ENCODE measurements at regions of chr3 and their contacts with region 1.

Region 1: GRCh38 chr3:170506556-170506955 is 79.3 kb downstream of the SLC7A14 start:
- DNase-seq: no peak
- H3K4me3 ChIP-seq: no peak overlapping the region
- H3K27ac ChIP-seq: no peak overlapping the region
- H3K4me1 ChIP-seq: no peaks in the 10 kb centered on the region; a peak in 1 of 7 replicates
- H3K27me3 ChIP-seq: no peaks in the 10 kb centered on the region
- CTCF ChIP-seq: no peak
- EP300 ChIP-seq: no peak
- POLR2A ChIP-seq: no peak
- RAD21 ChIP-seq: no peak

Region 2: GRCh38 chr3:170476291-170476690 is 30.3 kb before region 1 on chr3:
- CTCF ChIA-PET with region 1: no interaction called
- POLR2A ChIA-PET with region 1: no interaction called
- DNase-seq: peak in 1 of 2 experiments; percentile 44
- H3K4me3 ChIP-seq: no peak overlapping the region
- H3K27ac ChIP-seq: no peak overlapping the region
- H3K4me1 ChIP-seq: peaks cover 0 to 3% (median 0%) of the 10 kb centered on the region in 4 experiments; a peak in 1 of 7 replicates
- H3K27me3 ChIP-seq: no peaks in the 10 kb centered on the region
- CTCF ChIP-seq: no peak
- EP300 ChIP-seq: no peak
- POLR2A ChIP-seq: no peak
- RAD21 ChIP-seq: peak in 1 of 2 experiments; percentile 8; a peak in 1 of 4 replicates

Region 3: DNA sequence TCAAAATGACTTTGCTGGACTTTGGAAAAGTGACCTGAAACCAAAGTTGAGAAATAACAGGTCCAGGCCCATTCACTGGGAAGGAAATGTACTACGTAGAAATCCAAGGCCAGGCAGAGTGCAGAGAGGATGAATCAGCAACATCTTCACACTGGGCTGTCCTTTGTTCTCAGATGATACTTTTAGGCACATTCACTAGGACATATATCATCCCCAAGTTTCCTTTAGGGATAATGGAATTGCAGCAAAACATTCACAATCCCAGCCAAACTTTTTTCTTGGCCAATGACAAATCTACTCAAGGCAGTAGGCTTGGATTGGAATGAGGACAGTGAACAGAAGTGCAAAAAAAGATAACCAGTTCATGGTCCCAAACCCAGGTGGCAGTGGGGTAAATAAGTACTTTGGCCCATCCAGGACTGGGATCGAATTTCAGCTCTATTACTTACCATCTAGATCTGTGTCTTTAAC is 12.8 kb before region 1 on chr3:
- CTCF ChIA-PET with region 1: interaction called, 10 read pairs
- POLR2A ChIA-PET with region 1: no interaction called
- DNase-seq: no peak
- H3K4me3 ChIP-seq: no peak overlapping the region
- H3K27ac ChIP-seq: no peak overlapping the region
- H3K4me1 ChIP-seq: peaks cover 0 to 3% (median 0%) of the 10 kb centered on the region in 4 experiments; a peak in 1 of 7 replicates
- H3K27me3 ChIP-seq: no peaks in the 10 kb centered on the region
- CTCF ChIP-seq: no peak
- EP300 ChIP-seq: no peak
- POLR2A ChIP-seq: no peak
- RAD21 ChIP-seq: no peak